ENCODE measurements at regions of chr1 and their contacts with region 1.

Region 1: DNA sequence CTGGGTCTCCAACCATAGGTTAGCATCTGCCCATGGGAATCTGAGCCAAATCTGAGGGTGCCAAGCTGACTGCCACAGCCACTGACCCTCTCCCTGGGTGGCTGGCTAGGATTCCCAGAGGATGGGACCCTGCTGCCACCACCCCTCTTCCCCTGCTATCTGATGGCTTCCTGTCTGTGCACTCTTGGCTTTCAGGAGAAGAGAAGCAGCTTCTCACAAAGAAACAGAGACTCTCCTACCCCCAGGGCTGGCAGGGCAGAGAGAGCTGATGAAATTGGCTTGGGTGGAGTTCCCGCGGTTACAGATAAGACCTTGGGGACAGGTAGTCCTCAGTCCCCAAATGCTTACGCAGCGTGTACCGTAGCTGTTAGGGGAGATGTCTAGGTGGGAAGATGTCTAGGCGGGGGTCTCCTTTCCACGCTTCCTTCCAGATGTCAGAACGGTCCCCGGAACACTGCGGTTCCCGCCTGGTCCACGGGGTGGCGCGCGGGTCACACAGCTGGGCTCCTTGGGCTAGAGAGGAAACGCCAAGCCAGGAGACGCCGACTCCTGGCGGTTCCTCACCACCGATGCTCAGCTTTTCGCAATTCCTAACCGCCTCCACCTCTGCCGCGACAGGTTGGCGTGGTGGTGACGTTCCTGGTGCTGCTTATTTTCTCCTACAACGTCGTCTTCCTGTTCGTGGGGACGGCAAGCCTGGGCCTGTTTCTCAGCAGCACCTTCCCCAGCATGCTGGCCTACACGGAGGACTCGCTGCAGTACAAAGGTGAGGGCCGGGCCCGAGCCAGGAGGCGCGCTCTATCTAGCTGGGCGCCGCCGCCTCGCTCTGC is 40.1 kb downstream of the ELK4 start:
- DNase-seq: peak; percentile 98
- H3K4me3 ChIP-seq: peak overlapping the region; percentile 50 to 61 (median 54)
- H3K27ac ChIP-seq: peak overlapping the region in 3 of 4 donors; percentile 40 to 64 (median 44)
- H3K4me1 ChIP-seq: peaks cover 11 to 21% (median 16%) of the 10 kb centered on the region in 4 donors
- H3K27me3 ChIP-seq: no peaks in the 10 kb centered on the region
- CTCF ChIP-seq: peak; percentile 98
- EP300 ChIP-seq: no peak
- POLR2A ChIP-seq: no peak

Region 2: DNA sequence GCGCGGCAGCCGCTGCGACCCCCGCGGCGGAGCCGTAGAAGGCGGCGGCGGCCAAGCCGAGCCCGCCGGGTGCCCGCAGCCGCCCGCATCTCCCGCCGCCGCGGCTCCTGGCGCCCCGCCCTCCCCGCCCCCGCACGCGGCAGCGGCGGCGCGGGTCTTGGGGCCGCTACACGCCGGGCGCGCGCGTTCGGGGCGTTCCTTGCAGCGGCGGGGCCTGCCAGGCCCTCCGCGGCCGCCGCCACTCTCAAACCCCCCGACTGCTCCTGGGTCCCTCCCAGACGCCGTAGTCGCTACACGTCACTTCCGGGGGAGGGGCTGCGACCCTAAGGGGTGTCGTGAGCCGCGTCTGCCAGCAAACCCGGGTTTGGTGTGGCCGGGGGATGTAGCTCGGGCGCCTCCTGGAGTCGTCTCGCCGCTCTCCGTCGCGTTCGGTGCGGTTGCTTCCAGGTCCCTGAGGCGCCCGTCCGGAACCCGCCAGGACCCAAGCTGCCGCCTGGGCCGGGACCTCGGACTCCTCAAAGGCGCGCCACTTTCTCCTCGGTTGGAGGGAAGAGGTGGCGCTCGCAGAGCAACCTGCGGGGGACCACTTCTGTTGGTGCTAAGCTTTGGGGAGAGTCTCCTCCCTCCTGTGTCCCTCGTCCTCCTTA is 40.1 kb after region 1 on chr1 and contains the start of gene ELK4:
- intact Hi-C with region 1: loop called (anchors 1 kb)
- DNase-seq: peak; percentile 99
- H3K4me3 ChIP-seq: peak within 1 kb of the TSS; percentile 73 to 89 (median 81)
- H3K27ac ChIP-seq: peak within 1 kb of the TSS; percentile 96 to 98 (median 96)
- H3K4me1 ChIP-seq: peaks cover 32 to 47% (median 37%) of the 10 kb centered on the region in 4 donors
- H3K27me3 ChIP-seq: no peaks in the 10 kb centered on the region
- CTCF ChIP-seq: peak; percentile 74 to 87 (median 75)
- EP300 ChIP-seq: no peak
- POLR2A ChIP-seq: peak; percentile 70
- total RNA-seq, gene ELK4: 18.7 to 23.2 (median 20.5) TPM

Region 3: DNA sequence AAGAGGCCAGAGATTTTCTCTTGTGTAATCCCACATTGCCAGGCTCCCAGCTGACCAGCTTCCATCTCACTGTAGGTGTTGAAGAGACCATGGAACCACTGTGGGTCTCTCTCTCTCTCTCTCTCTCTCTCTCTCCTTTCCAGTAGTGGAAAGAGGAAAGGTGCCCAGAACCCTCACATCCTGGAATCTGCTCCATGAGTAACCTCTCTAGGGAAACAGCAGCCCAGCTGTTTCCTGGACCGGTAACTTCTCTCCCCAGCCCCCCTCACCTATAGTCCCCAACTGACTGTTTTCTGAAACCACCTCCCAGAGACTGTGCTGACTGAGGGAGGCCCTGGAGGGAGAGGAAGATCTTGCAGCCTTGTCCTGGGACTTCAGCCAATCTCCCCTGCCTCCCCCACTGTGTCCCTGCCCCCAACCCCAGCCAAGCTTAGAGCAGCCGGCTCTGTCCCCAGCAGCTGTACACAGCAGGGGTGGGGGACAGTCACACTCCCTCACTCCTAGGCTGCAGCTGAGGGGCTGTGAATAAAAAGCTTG is 109.2 kb after region 1 on chr1:
- intact Hi-C with region 1: loop called (anchors 5 kb)
- DNase-seq: no peak
- H3K4me3 ChIP-seq: no peak overlapping the region
- H3K27ac ChIP-seq: no peak overlapping the region
- H3K4me1 ChIP-seq: peaks cover 8 to 12% (median 8%) of the 10 kb centered on the region in 4 donors
- H3K27me3 ChIP-seq: no peaks in the 10 kb centered on the region
- CTCF ChIP-seq: no peak
- EP300 ChIP-seq: no peak
- POLR2A ChIP-seq: no peak

Region 4: GRCh38 chr1:205739348-205740160 is 147.8 kb after region 1 on chr1:
- intact Hi-C with region 1: no loop called
- DNase-seq: no peak
- H3K4me3 ChIP-seq: no peak overlapping the region
- H3K27ac ChIP-seq: peak overlapping the region in 1 of 4 donors; percentile 14
- H3K4me1 ChIP-seq: peaks cover 14 to 86% (median 62%) of the 10 kb centered on the region in 4 donors
- H3K27me3 ChIP-seq: no peaks in the 10 kb centered on the region
- CTCF ChIP-seq: no peak
- EP300 ChIP-seq: no peak
- POLR2A ChIP-seq: no peak

Measured in esophagus muscularis mucosa (tissue), 4 donors.